GM10248 (cell line): ENCODE measurements at regions of chr9 and their contacts with region 1.

Region 1: DNA sequence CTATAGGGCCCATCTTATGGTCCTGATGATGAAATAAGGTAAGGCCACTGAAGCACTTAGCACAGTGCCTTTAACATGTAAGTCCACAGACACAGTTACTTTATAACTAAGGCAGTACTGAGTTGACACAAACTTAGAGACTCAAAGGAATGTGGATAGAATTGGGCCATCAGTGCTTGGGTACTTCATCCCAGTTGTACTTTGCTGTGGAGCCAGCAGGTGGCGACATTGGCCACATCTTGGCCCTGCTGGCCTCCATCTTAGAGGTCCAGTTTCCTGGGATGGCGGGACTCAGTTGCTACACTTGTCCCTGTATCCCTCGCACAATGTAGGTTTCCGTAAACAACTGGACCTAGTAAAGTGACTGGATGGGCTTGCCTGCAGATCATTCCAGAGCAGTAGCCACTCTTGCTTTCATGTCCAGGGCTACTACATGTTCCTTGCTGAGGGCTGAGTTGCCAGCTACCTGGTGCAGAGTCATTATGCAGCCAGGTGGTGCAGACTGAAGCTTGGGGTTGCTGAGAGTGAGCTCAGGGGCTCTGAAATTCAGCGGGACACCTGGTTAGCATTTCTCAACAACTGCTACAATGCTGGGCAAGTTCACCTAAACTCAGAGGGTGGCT is 10.6 kb downstream of the MTAP start:
- DNase-seq: peak; percentile 62
- CTCF ChIP-seq: peak; percentile 90

Region 2: GRCh38 chr9:21802195-21803000 is 10.7 kb before region 1 on chr9 and contains the start of gene MTAP:
- CTCF ChIA-PET with region 1: interaction called, 36 read pairs
- POLR2A ChIA-PET with region 1: no interaction called
- DNase-seq: peak; percentile 87
- CTCF ChIP-seq: no peak

Region 3: DNA sequence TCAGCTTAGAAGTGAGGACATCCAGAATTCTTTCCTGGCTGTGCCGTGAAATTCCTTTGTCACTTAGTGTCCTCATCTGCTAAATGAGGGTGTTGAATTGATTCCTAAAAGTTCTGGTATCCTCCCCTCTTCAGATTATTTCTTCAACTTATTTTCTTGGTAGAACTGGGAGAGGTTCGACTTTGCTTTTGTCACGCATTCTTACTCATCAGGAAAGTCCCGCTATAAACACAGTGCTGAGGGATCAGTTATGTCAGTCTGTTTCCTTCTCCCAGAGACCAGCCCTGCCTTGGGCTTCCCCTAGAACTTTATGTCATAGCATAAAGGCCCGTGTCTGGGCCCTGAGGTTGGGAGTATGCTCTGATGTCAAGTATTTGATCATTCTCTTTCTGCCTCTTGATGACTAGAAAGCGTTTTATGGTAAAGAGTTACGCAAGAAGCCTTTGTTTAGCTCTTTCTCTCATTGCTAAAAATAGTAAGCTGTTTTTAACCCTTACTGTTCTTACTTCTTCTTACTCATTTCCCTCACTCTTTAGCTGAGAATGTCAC is 19.0 kb after region 1 on chr9:
- CTCF ChIA-PET with region 1: interaction called, 27 read pairs
- POLR2A ChIA-PET with region 1: no interaction called
- DNase-seq: peak; percentile 51
- CTCF ChIP-seq: no peak

Region 4: GRCh38 chr9:22037954-22038690 is 225.1 kb after region 1 on chr9:
- CTCF ChIA-PET with region 1: interaction called, 109 read pairs
- POLR2A ChIA-PET with region 1: no interaction called
- DNase-seq: no peak
- CTCF ChIP-seq: no peak

Region 5: DNA sequence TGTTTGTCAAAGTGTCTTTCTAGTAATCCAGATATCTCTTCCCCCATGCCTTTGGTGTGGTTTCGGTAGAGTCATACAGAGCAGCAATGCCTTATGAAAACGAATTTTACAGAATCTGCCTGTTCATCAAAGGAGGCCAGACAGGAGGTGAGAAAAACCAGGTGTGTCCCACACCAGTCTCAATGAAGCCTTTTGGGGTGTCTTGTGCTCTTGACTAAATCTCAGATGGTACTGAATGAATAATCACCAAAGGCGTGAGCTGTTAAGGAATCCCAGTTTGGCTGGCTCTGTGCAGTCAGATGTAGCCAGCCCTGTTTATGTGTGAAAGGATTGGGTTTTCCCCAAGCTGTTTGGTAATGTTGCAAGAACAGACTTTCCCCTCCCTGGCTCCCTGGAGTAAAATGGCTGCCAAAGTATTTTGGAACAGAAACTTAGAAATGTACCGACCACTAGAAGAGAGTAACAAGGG is 266.9 kb after region 1 on chr9:
- CTCF ChIA-PET with region 1: interaction called, 12 read pairs
- POLR2A ChIA-PET with region 1: no interaction called
- DNase-seq: peak; percentile 10
- CTCF ChIP-seq: no peak

Region 6: GRCh38 chr9:22244141-22245011 is 431.3 kb after region 1 on chr9:
- CTCF ChIA-PET with region 1: interaction called, 179 read pairs
- POLR2A ChIA-PET with region 1: no interaction called
- DNase-seq: peak; percentile 14
- CTCF ChIP-seq: peak; percentile 67